ENCODE measurements at regions of chr6 and their contacts with region 1.

Region 1: GRCh38 chr6:32984605-32985389 is 16.4 kb downstream of the BRD2 start:
- DNase-seq: peak; percentile 60 to 92
- H3K4me3 ChIP-seq: no peak overlapping the region
- H3K27ac ChIP-seq: no peak overlapping the region
- H3K4me1 ChIP-seq: peaks cover 0 to 6% (median 2%) of the 10 kb centered on the region in 4 experiments; a peak in 4 of 7 replicates
- H3K27me3 ChIP-seq: no peaks in the 10 kb centered on the region
- CTCF ChIP-seq: peak; percentile 83 to 94 (median 90)
- EP300 ChIP-seq: no peak
- POLR2A ChIP-seq: peak in 1 of 2 experiments; percentile 38; a peak in 1 of 3 replicates
- RAD21 ChIP-seq: peak; percentile 90 to 94

Region 2: GRCh38 chr6:32857156-32857891 is 127.5 kb before region 1 on chr6:
- CTCF ChIA-PET with region 1: no interaction called
- POLR2A ChIA-PET with region 1: no interaction called
- DNase-seq: no peak
- H3K4me3 ChIP-seq: no peak overlapping the region
- H3K27ac ChIP-seq: no peak overlapping the region
- H3K4me1 ChIP-seq: peaks cover 0 to 6% (median 1%) of the 10 kb centered on the region in 4 experiments; a peak in 6 of 7 replicates
- H3K27me3 ChIP-seq: peaks cover 3 to 29% (median 26%) of the 10 kb centered on the region in 4 experiments
- CTCF ChIP-seq: no peak
- EP300 ChIP-seq: no peak
- POLR2A ChIP-seq: no peak
- RAD21 ChIP-seq: no peak

Region 3: DNA sequence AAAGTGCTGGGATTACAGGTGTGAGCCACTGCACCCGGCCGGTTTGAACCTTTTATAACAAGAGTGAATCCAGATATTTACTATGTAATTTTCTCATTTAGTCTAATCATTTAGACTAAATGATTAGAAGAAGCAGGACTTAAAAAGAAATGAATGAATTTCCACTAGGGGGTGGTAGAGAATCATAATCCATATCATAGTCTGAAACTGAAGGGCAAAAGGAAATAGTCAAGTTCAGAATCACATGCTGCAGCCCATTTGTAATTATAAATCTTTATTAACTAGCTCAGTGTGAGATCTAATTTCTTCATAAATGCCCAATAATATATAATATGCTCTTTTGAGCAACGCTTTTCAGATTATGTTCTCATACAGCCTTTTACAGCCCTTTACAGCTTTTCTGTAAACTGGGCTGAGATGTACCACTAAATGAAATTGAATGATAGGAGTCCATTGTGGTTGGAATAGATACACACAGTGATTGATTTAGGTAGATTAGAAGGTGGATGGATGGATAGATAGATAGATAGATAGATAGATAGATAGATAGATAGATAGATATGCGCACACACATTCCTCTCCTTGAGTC is 99.0 kb before region 1 on chr6:
- CTCF ChIA-PET with region 1: interaction called, 23 read pairs
- POLR2A ChIA-PET with region 1: interaction called, 5 read pairs
- DNase-seq: no peak
- H3K4me3 ChIP-seq: no peak overlapping the region
- H3K27ac ChIP-seq: no peak overlapping the region
- H3K4me1 ChIP-seq: no peaks in the 10 kb centered on the region
- H3K27me3 ChIP-seq: no peaks in the 10 kb centered on the region
- CTCF ChIP-seq: peak in 2 of 3 experiments; percentile 25 to 38; a peak in 2 of 4 replicates
- EP300 ChIP-seq: no peak
- POLR2A ChIP-seq: no peak
- RAD21 ChIP-seq: peak; percentile 63 to 67

Region 4: GRCh38 chr6:32933636-32934085 is 51.1 kb before region 1 on chr6:
- CTCF ChIA-PET with region 1: interaction called, 48 read pairs
- POLR2A ChIA-PET with region 1: interaction called, 4 read pairs
- DNase-seq: peak in 1 of 2 experiments; percentile 89
- H3K4me3 ChIP-seq: no peak overlapping the region
- H3K27ac ChIP-seq: no peak overlapping the region
- H3K4me1 ChIP-seq: no peaks in the 10 kb centered on the region
- H3K27me3 ChIP-seq: no peaks in the 10 kb centered on the region
- CTCF ChIP-seq: peak; percentile 75 to 84 (median 82)
- EP300 ChIP-seq: no peak
- POLR2A ChIP-seq: no peak
- RAD21 ChIP-seq: peak; percentile 59 to 73

Region 5: DNA sequence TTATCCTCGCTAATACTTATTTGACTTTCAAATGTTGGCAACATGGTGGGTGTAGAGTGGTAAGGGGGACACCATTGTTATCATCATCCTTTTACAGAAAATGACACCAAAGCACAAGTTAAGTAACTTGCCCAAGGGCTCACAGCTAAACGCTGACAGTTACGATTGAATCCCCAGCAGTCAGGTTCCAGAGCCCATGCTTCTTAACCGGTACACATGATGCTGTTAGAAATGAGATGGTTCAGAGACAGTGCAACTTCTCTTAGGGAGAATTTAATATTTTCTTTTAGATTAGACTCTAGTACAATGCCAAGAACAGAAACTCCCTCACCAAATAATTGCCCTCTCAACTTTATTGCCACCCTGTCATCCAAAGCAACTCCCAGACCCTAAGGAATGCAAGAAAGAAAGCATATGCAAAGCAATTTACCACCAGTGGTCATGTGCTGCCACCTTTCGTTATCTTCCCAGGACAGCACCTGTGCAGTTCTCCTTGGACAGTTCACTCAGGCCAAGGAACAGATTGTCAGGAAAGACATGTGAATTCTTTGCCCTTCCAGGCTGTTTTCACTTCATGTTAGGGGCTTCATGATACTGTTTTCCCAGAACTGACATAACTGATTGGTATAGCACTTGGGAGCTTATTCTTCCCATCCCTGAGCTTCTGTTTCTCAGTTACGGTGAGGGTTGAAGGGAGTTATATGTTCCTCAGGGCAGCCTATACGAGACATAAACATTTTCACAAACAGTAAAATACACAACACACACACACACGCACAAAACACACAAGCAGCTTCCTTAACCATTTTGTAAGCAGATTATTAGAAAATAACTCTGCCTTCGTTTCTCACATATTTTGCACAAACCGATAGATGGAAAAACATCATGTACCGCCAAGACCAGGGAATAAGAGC is 37.0 kb before region 1 on chr6:
- CTCF ChIA-PET with region 1: interaction called, 41 read pairs
- POLR2A ChIA-PET with region 1: interaction called, 1,158 read pairs
- DNase-seq: peak; percentile 15 to 63
- H3K4me3 ChIP-seq: no peak overlapping the region
- H3K27ac ChIP-seq: no peak overlapping the region
- H3K4me1 ChIP-seq: peaks cover 0 to 8% (median 3%) of the 10 kb centered on the region in 4 experiments; a peak in 5 of 7 replicates
- H3K27me3 ChIP-seq: no peaks in the 10 kb centered on the region; a peak in 1 of 7 replicates
- CTCF ChIP-seq: peak; percentile 60 to 92 (median 91)
- EP300 ChIP-seq: no peak
- POLR2A ChIP-seq: no peak
- RAD21 ChIP-seq: peak; percentile 95 to 96

Region 6: DNA sequence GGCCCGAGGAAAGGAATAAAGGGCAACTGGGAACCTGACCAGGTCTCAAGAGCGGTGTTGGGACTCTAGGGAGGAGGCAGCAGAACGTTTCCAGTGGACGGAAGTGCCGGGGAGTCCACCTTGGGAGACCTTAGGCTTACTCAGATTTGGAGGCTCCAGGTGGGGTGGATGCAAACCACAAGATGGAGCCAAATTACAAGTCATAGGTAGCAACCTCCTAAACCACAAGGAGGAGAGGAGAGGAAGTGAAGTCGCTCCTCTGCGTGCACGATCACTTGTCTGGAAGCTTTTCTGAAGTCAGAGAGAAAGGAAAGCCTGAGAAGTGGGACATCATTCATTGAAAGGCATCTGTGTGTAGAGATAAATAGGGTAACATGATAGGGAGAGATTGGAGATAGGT is 15.3 kb after region 1 on chr6:
- CTCF ChIA-PET with region 1: interaction called, 33 read pairs
- POLR2A ChIA-PET with region 1: interaction called, 5 read pairs
- DNase-seq: peak in 1 of 2 experiments; percentile 41
- H3K4me3 ChIP-seq: no peak overlapping the region
- H3K27ac ChIP-seq: no peak overlapping the region
- H3K4me1 ChIP-seq: no peaks in the 10 kb centered on the region
- H3K27me3 ChIP-seq: peaks cover 0 to 2% (median 0%) of the 10 kb centered on the region in 4 experiments; a peak in 2 of 7 replicates
- CTCF ChIP-seq: peak; percentile 46 to 93 (median 91)
- EP300 ChIP-seq: no peak
- POLR2A ChIP-seq: no peak
- RAD21 ChIP-seq: peak; percentile 96 to 97

Region 7: GRCh38 chr6:33147807-33148666 is 163.2 kb after region 1 on chr6:
- CTCF ChIA-PET with region 1: interaction called, 15 read pairs
- POLR2A ChIA-PET with region 1: no interaction called
- DNase-seq: no peak
- H3K4me3 ChIP-seq: no peak overlapping the region
- H3K27ac ChIP-seq: no peak overlapping the region
- H3K4me1 ChIP-seq: peaks cover 0 to 2% (median 0%) of the 10 kb centered on the region in 4 experiments; a peak in 1 of 7 replicates
- H3K27me3 ChIP-seq: no peaks in the 10 kb centered on the region
- CTCF ChIP-seq: peak in 2 of 3 experiments; percentile 61 to 72; a peak in 3 of 4 replicates
- EP300 ChIP-seq: no peak
- POLR2A ChIP-seq: no peak
- RAD21 ChIP-seq: peak; percentile 75 to 80

Region 8: DNA sequence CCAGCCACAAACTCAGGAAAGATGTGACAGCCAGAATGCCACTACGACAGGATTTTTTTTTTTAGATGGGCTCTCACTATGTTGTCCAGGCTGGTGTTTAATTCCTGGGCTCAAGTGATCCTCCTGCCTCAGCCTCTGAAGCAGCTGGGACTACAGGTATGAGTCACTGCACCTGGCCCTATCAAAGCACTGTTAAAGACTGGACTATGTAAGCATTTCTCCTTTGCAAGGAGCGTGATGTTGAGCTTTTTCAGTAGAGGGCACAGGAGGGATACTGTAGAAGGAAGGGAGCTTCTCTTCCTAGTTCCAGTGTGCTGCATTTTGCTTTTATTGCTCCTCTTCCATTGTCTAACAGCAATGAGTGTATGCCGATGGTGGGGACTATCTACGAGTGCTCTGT is 505.4 kb after region 1 on chr6:
- CTCF ChIA-PET with region 1: no interaction called
- POLR2A ChIA-PET with region 1: no interaction called
- DNase-seq: no peak
- H3K4me3 ChIP-seq: no peak overlapping the region
- H3K27ac ChIP-seq: no peak overlapping the region
- H3K4me1 ChIP-seq: peaks cover 0 to 3% (median 1%) of the 10 kb centered on the region in 4 experiments; a peak in 2 of 7 replicates
- H3K27me3 ChIP-seq: no peaks in the 10 kb centered on the region
- CTCF ChIP-seq: peak in 1 of 3 experiments; percentile 18; a peak in 1 of 4 replicates
- EP300 ChIP-seq: no peak
- POLR2A ChIP-seq: no peak
- RAD21 ChIP-seq: peak; percentile 2 to 16; a peak in 1 of 4 replicates